ENCODE measurements at regions of chr11 and their contacts with region 1.

Region 1: GRCh38 chr11:110429731-110430266 is at the start of gene FDX1:
- DNase-seq: peak; percentile 57 to 87 (median 68)
- ATAC-seq: peak; percentile 84 to 88 (median 84)
- H3K4me3 ChIP-seq: peak within 1 kb of the TSS; percentile 68 to 88
- H3K4me3 Mint-ChIP-seq: peak within 1 kb of the TSS; percentile 97 to 100 (median 98)
- H3K27ac ChIP-seq: peak within 1 kb of the TSS; percentile 69
- H3K27ac Mint-ChIP-seq: peak within 1 kb of the TSS; percentile 96 to 97
- H3K4me1 ChIP-seq: peaks cover 19 to 25% of the 10 kb centered on the region in 2 experiments
- H3K4me1 Mint-ChIP-seq: peaks cover 45 to 53% (median 45%) of the 10 kb centered on the region in 3 donors
- H3K27me3 ChIP-seq: no peaks in the 10 kb centered on the region
- H3K27me3 Mint-ChIP-seq: no peaks in the 10 kb centered on the region
- total RNA-seq, gene FDX1: 9.1 to 12.5 (median 10.1) TPM

Region 2: DNA sequence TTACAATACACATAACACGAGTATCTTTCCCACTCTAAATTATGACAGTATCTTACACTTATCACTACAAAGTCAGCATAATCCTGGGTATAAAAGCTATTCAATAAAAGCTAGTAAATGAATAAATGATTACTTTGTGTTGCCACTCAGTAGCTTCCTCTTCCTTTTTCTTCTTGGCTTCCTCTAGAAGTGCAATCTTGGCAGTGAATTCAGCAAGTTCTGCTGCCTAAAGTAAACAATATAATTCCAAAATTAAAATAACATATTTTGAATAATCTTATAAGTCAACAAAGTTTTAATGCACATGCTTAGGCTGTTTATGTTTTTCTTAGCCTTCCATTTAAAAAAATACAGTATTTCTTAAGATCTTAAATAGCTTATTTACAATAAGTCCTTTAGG is 193.8 kb before region 1 on chr11:
- CTCF ChIA-PET with region 1: interaction called, 3 to 11 read pairs
- POLR2A ChIA-PET with region 1: no interaction called
- DNase-seq: no peak
- ATAC-seq: no peak
- H3K4me3 ChIP-seq: no peak overlapping the region
- H3K4me3 Mint-ChIP-seq: no peak overlapping the region
- H3K27ac ChIP-seq: no peak overlapping the region
- H3K27ac Mint-ChIP-seq: no peak overlapping the region
- H3K4me1 ChIP-seq: no peaks in the 10 kb centered on the region
- H3K4me1 Mint-ChIP-seq: peaks cover 0 to 5% (median 5%) of the 10 kb centered on the region in 3 donors
- H3K27me3 ChIP-seq: no peaks in the 10 kb centered on the region
- H3K27me3 Mint-ChIP-seq: no peaks in the 10 kb centered on the region

Region 3: DNA sequence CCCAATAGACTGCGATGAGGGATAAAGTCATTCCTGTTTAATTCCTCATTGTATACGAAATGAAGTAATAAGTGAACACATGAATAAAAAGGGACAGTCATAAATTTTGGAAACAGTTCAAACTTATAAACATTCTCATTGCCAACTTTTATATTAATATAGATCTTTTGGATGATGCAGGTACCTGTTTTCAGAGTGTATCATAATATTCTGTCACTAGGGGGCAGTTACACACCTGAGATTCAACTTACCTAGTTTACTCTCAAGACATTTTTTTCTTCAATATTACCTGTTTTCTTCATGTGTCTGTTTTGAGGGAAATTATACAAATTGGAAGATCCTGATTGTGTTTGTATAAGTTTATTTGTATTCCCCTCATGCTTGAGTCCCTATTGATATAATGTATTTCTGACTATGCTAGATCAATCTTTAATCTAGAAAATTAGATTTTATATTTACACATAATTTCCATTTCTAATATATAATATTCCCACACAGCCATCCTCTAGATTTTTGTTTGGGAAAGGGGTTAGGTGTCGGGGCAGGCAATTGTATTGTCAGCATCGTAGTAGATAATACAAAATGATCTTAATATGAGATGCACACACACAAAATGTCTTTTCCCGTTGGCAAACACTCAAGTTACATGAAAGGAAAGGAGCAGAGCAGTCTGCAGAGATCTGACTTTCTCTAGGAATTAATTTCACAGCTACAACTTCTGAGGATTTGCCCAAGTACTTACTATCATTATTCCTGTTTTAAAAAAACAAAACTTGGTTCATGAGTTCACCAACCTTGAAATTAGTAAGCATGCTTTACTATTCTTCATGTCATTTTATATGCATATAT is 18.3 kb after region 1 on chr11:
- CTCF ChIA-PET with region 1: interaction called, 12 read pairs
- POLR2A ChIA-PET with region 1: interaction called, 3 to 6 read pairs
- DNase-seq: peak in 1 of 35 experiments; percentile 41
- ATAC-seq: no peak
- H3K4me3 ChIP-seq: no peak overlapping the region
- H3K4me3 Mint-ChIP-seq: no peak overlapping the region
- H3K27ac ChIP-seq: no peak overlapping the region
- H3K27ac Mint-ChIP-seq: peak overlapping the region in 1 of 2 donors; percentile 23
- H3K4me1 ChIP-seq: peaks cover 0 to 3% of the 10 kb centered on the region in 2 experiments
- H3K4me1 Mint-ChIP-seq: peaks cover 37 to 41% (median 38%) of the 10 kb centered on the region in 3 donors
- H3K27me3 ChIP-seq: no peaks in the 10 kb centered on the region
- H3K27me3 Mint-ChIP-seq: no peaks in the 10 kb centered on the region

Region 4: DNA sequence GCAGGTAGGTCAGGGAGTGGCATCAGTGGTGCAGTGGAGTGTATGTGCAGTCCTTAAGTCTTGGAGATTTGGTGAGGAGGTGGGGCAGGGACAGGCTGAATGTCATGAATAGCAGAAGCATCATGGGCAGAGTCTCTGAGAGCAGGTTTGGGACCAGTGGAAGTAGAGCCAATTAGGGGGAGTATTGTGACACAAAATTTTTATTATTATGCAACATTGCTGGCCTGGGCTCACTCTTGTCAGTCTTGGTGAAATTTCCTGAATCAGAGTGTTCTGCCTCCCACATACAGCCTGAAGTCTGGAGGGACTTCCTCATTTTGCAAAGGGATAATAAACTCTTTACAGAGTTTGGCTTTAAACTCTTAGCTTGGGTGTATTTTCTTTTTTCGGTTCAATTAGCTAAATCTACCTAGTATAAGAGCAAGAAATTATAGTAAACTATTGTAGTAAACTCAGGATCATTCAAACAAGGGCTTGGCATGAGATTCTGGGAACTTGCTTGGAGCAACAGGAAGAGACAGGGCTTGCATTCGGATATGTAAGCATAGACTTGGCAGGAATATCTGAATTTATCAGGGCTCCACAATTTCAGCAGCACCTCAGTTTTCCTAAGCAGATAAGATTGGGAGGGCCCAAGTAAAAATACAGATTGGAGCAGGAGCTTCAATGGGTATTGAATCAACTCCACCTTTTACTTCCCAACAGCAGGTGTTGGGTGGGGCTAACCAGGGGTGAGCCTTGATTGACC is 67.6 kb after region 1 on chr11:
- CTCF ChIA-PET with region 1: no interaction called
- POLR2A ChIA-PET with region 1: no interaction called
- DNase-seq: no peak
- ATAC-seq: no peak
- H3K4me3 ChIP-seq: no peak overlapping the region
- H3K4me3 Mint-ChIP-seq: no peak overlapping the region
- H3K27ac ChIP-seq: no peak overlapping the region
- H3K27ac Mint-ChIP-seq: no peak overlapping the region
- H3K4me1 ChIP-seq: no peaks in the 10 kb centered on the region
- H3K4me1 Mint-ChIP-seq: no peaks in the 10 kb centered on the region
- H3K27me3 ChIP-seq: no peaks in the 10 kb centered on the region
- H3K27me3 Mint-ChIP-seq: peaks cover 3 to 4% of the 10 kb centered on the region in 2 donors

Region 5: GRCh38 chr11:111344032-111344431 is 914.2 kb after region 1 on chr11:
- CTCF ChIA-PET with region 1: no interaction called
- POLR2A ChIA-PET with region 1: no interaction called
- DNase-seq: no peak
- ATAC-seq: no peak
- H3K4me3 ChIP-seq: no peak overlapping the region
- H3K4me3 Mint-ChIP-seq: no peak overlapping the region
- H3K27ac ChIP-seq: no peak overlapping the region
- H3K27ac Mint-ChIP-seq: no peak overlapping the region
- H3K4me1 ChIP-seq: no peaks in the 10 kb centered on the region
- H3K4me1 Mint-ChIP-seq: no peaks in the 10 kb centered on the region
- H3K27me3 ChIP-seq: no peaks in the 10 kb centered on the region
- H3K27me3 Mint-ChIP-seq: no peaks in the 10 kb centered on the region

Measured in T-cell (primary cell).